ENCODE measurements at regions of chr14 and their contacts with region 1.

Region 1: GRCh38 chr14:48075487-48075886 is 400.1 kb upstream of the MDGA2 start:
- DNase-seq: no peak
- H3K4me3 Mint-ChIP-seq: no peak overlapping the region
- H3K27ac Mint-ChIP-seq: no peak overlapping the region
- H3K4me1 Mint-ChIP-seq: no peaks in the 10 kb centered on the region
- H3K27me3 Mint-ChIP-seq: peaks cover 13% of the 10 kb centered on the region
- CTCF ChIP-seq: no peak

Region 2: GRCh38 chr14:48023881-48024280 is 51.6 kb before region 1 on chr14:
- CTCF ChIA-PET with region 1: no interaction called
- POLR2A ChIA-PET with region 1: no interaction called
- intact Hi-C with region 1: loop called (anchors 2 kb)
- DNase-seq: peak; percentile 8
- H3K4me3 Mint-ChIP-seq: no peak overlapping the region
- H3K27ac Mint-ChIP-seq: no peak overlapping the region
- H3K4me1 Mint-ChIP-seq: no peaks in the 10 kb centered on the region
- H3K27me3 Mint-ChIP-seq: peaks cover 9% of the 10 kb centered on the region
- CTCF ChIP-seq: no peak

Region 3: GRCh38 chr14:48193893-48194292 is 118.4 kb after region 1 on chr14:
- CTCF ChIA-PET with region 1: no interaction called
- POLR2A ChIA-PET with region 1: no interaction called
- intact Hi-C with region 1: no loop called
- DNase-seq: no peak
- H3K4me3 Mint-ChIP-seq: no peak overlapping the region
- H3K27ac Mint-ChIP-seq: no peak overlapping the region
- H3K4me1 Mint-ChIP-seq: no peaks in the 10 kb centered on the region
- H3K27me3 Mint-ChIP-seq: no peaks in the 10 kb centered on the region
- CTCF ChIP-seq: no peak

Measured in MCF 10A (cell line).